Activated naive CD8-positive, alpha-beta T cell treated with anti-CD3 and anti-CD28 coated beads, Interleukin-2, amount 10 ng/mL, durations not matched to agents 7 days and 5 days (primary cell): ENCODE measurements at regions of chr22 and their contacts with region 1.

Region 1: GRCh38 chr22:37199103-37199759 is 11.2 kb upstream of the C1QTNF6 start:
- DNase-seq: peak; percentile 100
- ATAC-seq: peak; percentile 97
- H3K4me3 Mint-ChIP-seq: peak overlapping the region; percentile 81
- H3K27ac Mint-ChIP-seq: peak overlapping the region; percentile 97
- H3K4me1 Mint-ChIP-seq: peaks cover 37% of the 10 kb centered on the region
- H3K27me3 Mint-ChIP-seq: no peaks in the 10 kb centered on the region

Region 2: DNA sequence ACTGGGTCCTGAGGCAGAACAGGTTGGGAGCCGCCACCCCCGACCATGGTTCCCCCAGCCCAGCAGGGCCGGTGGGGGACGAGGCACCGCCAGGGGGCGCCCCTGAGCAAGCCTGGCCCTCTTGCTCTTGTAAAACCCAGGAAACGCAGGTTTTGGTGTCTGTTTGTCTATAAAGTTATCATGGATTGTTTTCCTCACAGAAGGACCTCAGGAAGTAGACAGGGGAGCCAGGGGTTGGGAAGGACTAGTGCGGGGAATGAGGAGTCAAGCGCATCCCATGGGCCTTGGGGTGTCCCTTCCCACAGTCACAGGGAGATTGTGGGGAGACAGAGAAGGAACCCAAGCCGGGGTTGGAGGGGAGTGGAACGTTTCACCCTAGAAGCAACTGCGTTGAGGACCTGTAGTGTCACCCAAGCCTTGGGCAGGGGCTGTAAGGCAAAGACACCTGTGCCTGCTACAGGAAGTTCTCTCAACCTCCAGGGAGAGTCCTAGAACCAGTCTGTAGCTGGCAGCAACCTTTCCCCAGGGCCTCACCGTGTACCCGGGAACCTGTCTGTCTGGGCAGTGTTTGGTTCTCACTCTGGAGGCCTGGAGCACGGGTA is 121.2 kb before region 1 on chr22:
- POLR2A ChIA-PET with region 1: interaction called, 33 read pairs
- DNase-seq: peak; percentile 94
- ATAC-seq: peak; percentile 17
- H3K4me3 Mint-ChIP-seq: peak overlapping the region; percentile 85
- H3K27ac Mint-ChIP-seq: peak overlapping the region; percentile 100
- H3K4me1 Mint-ChIP-seq: peaks cover 47% of the 10 kb centered on the region
- H3K27me3 Mint-ChIP-seq: no peaks in the 10 kb centered on the region

Region 3: DNA sequence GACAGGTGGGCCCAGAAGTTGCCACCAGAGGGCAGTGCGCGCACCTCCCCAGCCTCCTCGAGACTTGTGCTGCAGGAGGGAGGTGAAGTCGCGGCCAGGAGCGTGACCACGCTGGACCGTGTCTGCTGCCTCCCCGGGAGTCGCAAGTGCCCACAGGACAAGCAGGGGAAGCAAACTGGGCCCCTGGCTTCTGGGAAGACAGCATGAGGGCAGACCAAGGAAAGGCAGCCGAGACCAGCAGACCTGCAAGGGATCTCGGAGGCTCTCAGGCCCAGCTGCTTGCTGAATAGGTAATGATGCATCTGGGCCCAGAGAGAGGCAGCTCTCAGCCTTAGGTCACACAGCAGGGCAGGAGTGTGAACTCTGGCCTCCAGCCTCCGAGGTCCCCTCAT is 32.6 kb before region 1 on chr22:
- POLR2A ChIA-PET with region 1: interaction called, 68 read pairs
- DNase-seq: peak; percentile 87
- ATAC-seq: peak; percentile 49
- H3K4me3 Mint-ChIP-seq: peak overlapping the region; percentile 80
- H3K27ac Mint-ChIP-seq: peak overlapping the region; percentile 89
- H3K4me1 Mint-ChIP-seq: peaks cover 87% of the 10 kb centered on the region
- H3K27me3 Mint-ChIP-seq: no peaks in the 10 kb centered on the region

Region 4: GRCh38 chr22:37210041-37210803 is 11.0 kb after region 1 on chr22:
- POLR2A ChIA-PET with region 1: interaction called, 13 read pairs
- DNase-seq: peak; percentile 25
- ATAC-seq: no peak
- H3K4me3 Mint-ChIP-seq: no peak overlapping the region
- H3K27ac Mint-ChIP-seq: no peak overlapping the region
- H3K4me1 Mint-ChIP-seq: peaks cover 15% of the 10 kb centered on the region
- H3K27me3 Mint-ChIP-seq: peaks cover 2% of the 10 kb centered on the region

Region 5: DNA sequence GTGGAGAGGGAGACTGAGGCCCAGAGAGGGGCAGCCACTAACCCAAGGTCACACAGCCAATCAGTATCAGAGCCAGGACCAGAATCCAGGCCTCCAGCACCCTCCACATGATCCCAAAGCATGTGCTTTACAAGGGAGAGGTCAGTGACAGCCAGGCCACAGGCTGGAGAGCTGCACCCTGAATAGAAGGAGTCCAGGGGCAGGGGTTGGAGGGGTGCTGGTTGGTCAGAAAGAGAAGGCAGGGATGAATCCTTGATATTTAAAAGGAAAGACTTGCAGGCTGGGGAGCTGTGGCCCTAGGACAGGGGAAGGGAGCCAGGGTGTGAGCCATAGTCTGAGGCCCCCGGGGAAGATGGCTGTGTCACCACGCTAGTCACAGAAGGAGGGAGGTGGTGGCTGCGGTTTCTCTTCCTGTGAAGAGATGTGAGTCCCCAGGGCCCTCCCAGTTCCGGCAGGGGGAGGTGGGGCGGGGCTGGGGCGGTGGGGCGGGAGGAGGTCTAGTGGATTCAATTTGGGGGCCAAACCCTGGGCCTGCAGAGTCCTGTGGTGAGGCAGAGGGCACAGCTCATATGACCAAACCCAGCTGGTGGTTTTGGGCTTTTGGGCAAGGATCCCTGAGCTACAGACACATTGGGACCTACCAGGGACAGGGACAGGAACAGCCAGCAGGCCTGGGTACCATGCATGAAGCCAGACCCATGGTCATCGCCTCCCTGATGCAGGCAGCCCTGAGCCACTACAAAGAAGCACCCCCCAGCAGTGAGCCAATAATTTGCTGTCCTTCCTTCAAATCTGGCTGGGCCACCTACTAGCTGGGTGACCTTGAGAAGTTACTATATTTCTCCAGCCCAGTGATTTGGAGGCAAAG is 30.8 kb after region 1 on chr22:
- POLR2A ChIA-PET with region 1: interaction called, 11 read pairs
- DNase-seq: peak; percentile 84
- ATAC-seq: peak; percentile 59
- H3K4me3 Mint-ChIP-seq: peak overlapping the region; percentile 84
- H3K27ac Mint-ChIP-seq: peak overlapping the region; percentile 99
- H3K4me1 Mint-ChIP-seq: peaks cover 85% of the 10 kb centered on the region
- H3K27me3 Mint-ChIP-seq: no peaks in the 10 kb centered on the region